ENCODE measurements at regions of chr5 and their contacts with region 1.

Region 1: DNA sequence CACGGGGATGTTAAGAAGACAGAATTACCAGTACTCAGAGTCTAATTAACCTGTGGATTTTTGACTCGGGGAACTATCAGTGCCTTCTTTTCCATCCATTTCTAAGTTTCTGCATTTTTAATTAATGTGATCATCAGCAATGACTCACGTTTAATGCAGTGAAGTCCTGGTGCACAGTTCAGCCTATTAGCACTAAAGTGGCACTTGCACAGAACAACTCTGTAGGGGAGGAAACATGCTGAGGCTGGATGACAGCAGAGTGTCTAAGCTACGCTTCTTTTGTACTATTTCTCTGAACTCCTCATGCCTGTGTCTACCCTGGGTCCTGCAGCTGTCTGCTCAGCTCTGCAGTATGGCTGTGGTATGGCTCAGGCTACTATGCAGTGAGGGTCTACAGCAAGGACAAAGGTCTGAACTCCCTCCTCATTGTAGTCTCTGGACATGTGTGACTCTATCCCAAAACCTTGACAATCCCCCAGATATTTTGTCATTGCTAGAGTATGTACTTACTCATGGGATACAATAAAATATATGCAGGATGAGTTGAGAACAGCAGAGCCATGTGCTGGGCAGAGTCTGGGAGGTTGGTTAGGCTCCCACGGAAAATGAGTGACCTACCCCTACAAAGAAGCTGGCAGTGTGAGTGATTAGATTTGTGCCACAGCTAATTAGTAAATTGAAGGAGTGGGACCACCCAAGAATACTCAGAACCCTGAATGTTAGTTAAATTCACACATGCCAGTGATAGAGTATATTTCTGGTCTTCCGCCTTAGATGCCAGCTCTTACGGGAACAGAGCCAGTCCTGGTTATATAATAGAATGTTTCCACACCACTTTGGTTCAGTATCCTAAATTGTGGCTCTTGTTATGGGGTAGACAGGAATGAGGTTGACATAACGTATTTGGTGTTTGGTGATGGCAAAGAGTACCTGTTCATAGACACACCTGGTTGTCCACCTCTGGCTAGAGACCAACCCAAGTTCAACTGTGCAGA is 148.0 kb downstream of the GHR start:
- DNase-seq: no peak
- ATAC-seq: peak in 1 of 4 donors; percentile 15
- H3K4me3 ChIP-seq: no peak overlapping the region
- H3K27ac ChIP-seq: peak overlapping the region; percentile 41
- H3K4me1 ChIP-seq: peaks cover 58% of the 10 kb centered on the region
- H3K27me3 ChIP-seq: no peaks in the 10 kb centered on the region
- CTCF ChIP-seq: no peak

Region 2: GRCh38 chr5:42555797-42556196 is 15.5 kb before region 1 on chr5:
- intact Hi-C with region 1: loop called in 1 of 2 experiments (anchors 2 kb)
- DNase-seq: no peak
- ATAC-seq: peak; percentile 79 to 89 (median 84)
- H3K4me3 ChIP-seq: peak overlapping the region; percentile 2
- H3K27ac ChIP-seq: peak overlapping the region; percentile 84
- H3K4me1 ChIP-seq: peaks cover 32% of the 10 kb centered on the region
- H3K27me3 ChIP-seq: no peaks in the 10 kb centered on the region
- CTCF ChIP-seq: no peak

Measured in psoas muscle (tissue), 8 donors.